Transverse colon (tissue), 4 donors: ENCODE measurements at regions of chr3 and their contacts with region 1.

Region 1: GRCh38 chr3:108090701-108091451 is at the start of gene CD47:
- DNase-seq: peak; percentile 96
- H3K4me3 ChIP-seq: peak within 1 kb of the TSS; percentile 62 to 99 (median 96)
- H3K27ac ChIP-seq: peak within 1 kb of the TSS; percentile 82 to 96 (median 95)
- H3K4me1 ChIP-seq: peaks cover 0 to 38% (median 22%) of the 10 kb centered on the region in 4 donors
- H3K27me3 ChIP-seq: no peaks in the 10 kb centered on the region
- CTCF ChIP-seq: no peak
- EP300 ChIP-seq: no peak
- POLR2A ChIP-seq: peak; percentile 76
- total RNA-seq, gene CD47: 71.7 to 108 (median 93.4) TPM

Region 2: GRCh38 chr3:107927361-107928083 is 163.4 kb before region 1 on chr3:
- in situ Hi-C with region 1: loop called in 1 of 4 experiments (anchors 25 kb)
- intact Hi-C with region 1: no loop called
- DNase-seq: peak; percentile 71
- H3K4me3 ChIP-seq: peak overlapping the region; percentile 30 to 63 (median 48)
- H3K27ac ChIP-seq: no peak overlapping the region
- H3K4me1 ChIP-seq: peaks cover 4 to 13% (median 8%) of the 10 kb centered on the region in 4 donors
- H3K27me3 ChIP-seq: no peaks in the 10 kb centered on the region
- CTCF ChIP-seq: peak; percentile 82 to 95 (median 85)
- EP300 ChIP-seq: no peak
- POLR2A ChIP-seq: no peak

Region 3: GRCh38 chr3:107956991-107957900 is 133.6 kb before region 1 on chr3:
- in situ Hi-C with region 1: no loop called
- intact Hi-C with region 1: loop called (anchors 10 kb)
- DNase-seq: peak; percentile 59
- H3K4me3 ChIP-seq: peak overlapping the region in 1 of 4 donors; percentile 13
- H3K27ac ChIP-seq: peak overlapping the region; percentile 41 to 83 (median 68)
- H3K4me1 ChIP-seq: peaks cover 4 to 14% (median 9%) of the 10 kb centered on the region in 4 donors
- H3K27me3 ChIP-seq: no peaks in the 10 kb centered on the region
- CTCF ChIP-seq: no peak
- EP300 ChIP-seq: no peak
- POLR2A ChIP-seq: no peak

Region 4: GRCh38 chr3:108221911-108222852 is 131.3 kb after region 1 on chr3 and contains the start of gene IFT57:
- in situ Hi-C with region 1: loop called in 1 of 4 experiments (anchors 25 kb)
- intact Hi-C with region 1: no loop called
- DNase-seq: peak; percentile 98
- H3K4me3 ChIP-seq: peak within 1 kb of the TSS; percentile 67 to 80 (median 74)
- H3K27ac ChIP-seq: peak within 1 kb of the TSS; percentile 83 to 91 (median 88)
- H3K4me1 ChIP-seq: peaks cover 5 to 46% (median 30%) of the 10 kb centered on the region in 4 donors
- H3K27me3 ChIP-seq: no peaks in the 10 kb centered on the region
- CTCF ChIP-seq: no peak
- EP300 ChIP-seq: no peak
- POLR2A ChIP-seq: peak; percentile 86
- total RNA-seq, gene IFT57: 38.2 to 78.0 (median 57.4) TPM